Heart right ventricle (tissue), 16 donors: ENCODE measurements at regions of chr15 and their contacts with region 1.

Region 1: GRCh38 chr15:92059056-92059960 is 205.8 kb downstream of the SLCO3A1 start:
- DNase-seq: peak; percentile 34 to 62
- ATAC-seq: peak; percentile 50 to 63 (median 60)
- H3K4me3 ChIP-seq: no peak overlapping the region
- H3K27ac ChIP-seq: peak overlapping the region in 8 of 10 donors; percentile 23 to 88 (median 50)
- H3K4me1 ChIP-seq: peaks cover 16 to 75% (median 48%) of the 10 kb centered on the region in 9 donors
- H3K27me3 ChIP-seq: no peaks in the 10 kb centered on the region
- CTCF ChIP-seq: no peak

Region 2: GRCh38 chr15:91975241-91975978 is 83.9 kb before region 1 on chr15:
- intact Hi-C with region 1: loop called in 1 of 10 experiments (anchors 5 kb)
- DNase-seq: no peak
- ATAC-seq: peak in 6 of 8 donors; percentile 27 to 62 (median 47)
- H3K4me3 ChIP-seq: no peak overlapping the region
- H3K27ac ChIP-seq: peak overlapping the region in 5 of 10 donors; percentile 3 to 46 (median 25)
- H3K4me1 ChIP-seq: peaks cover 18 to 73% (median 54%) of the 10 kb centered on the region in 9 donors
- H3K27me3 ChIP-seq: no peaks in the 10 kb centered on the region
- CTCF ChIP-seq: peak in 3 of 9 donors; percentile 20 to 28 (median 27)

Region 3: DNA sequence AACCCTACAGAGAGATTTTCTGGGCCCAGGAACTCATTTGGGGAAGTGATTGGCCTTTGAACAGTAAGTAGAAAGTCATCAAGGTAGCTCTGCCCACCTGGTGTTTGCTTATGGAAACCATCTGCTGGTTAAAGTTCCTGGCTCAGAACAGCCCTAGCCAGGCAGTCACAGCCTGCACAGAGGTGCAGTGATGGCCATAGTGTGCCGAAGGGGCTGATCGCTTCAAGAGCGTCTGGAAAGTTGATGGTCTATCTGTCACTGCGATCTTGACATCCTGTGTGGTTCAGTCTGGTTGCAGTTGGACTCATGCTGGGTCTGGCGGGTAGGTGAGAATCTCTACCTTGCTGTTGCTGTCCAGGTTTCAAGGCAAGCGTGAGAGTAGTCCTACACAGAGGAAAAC is 54.2 kb before region 1 on chr15:
- intact Hi-C with region 1: loop called in 2 of 10 experiments (anchors 5 to 10 kb)
- DNase-seq: no peak
- ATAC-seq: no peak
- H3K4me3 ChIP-seq: no peak overlapping the region
- H3K27ac ChIP-seq: no peak overlapping the region
- H3K4me1 ChIP-seq: peaks cover 2 to 54% (median 33%) of the 10 kb centered on the region in 9 donors
- H3K27me3 ChIP-seq: no peaks in the 10 kb centered on the region
- CTCF ChIP-seq: no peak

Region 4: DNA sequence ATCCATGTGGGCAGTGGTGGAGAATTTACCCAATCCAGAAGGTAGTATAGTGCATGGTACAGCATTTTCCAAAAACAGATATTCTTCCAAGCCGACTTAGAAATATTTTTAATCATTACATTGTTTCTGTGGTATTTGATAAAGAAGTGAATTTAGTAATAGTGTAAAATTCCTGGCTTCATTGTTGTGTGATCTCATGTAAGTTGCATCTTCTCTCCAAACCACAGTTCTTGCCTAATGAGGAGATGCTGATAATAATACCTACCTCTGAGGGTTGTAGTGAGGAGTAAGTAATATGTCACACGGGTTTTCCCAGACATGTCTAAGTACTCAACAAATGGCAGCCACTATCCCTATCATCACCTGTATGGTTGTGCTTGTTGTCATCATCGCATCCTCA is 38.5 kb before region 1 on chr15:
- intact Hi-C with region 1: loop called in 1 of 10 experiments (anchors 5 kb)
- DNase-seq: no peak
- ATAC-seq: peak in 1 of 8 donors; percentile 23
- H3K4me3 ChIP-seq: no peak overlapping the region
- H3K27ac ChIP-seq: peak overlapping the region in 1 of 10 donors; percentile 41
- H3K4me1 ChIP-seq: peaks cover 24 to 75% (median 44%) of the 10 kb centered on the region in 9 donors
- H3K27me3 ChIP-seq: no peaks in the 10 kb centered on the region
- CTCF ChIP-seq: no peak